Mammary epithelial cell (primary cell): ENCODE measurements at regions of chr1 and their contacts with region 1.

Region 1: GRCh38 chr1:24321697-24322469 is 2.7 kb downstream of the GRHL3 start:
- DNase-seq: peak; percentile 98
- H3K4me3 ChIP-seq: peak overlapping the region; percentile 17 to 57 (median 40)
- H3K27ac ChIP-seq: peak overlapping the region; percentile 92
- H3K4me1 ChIP-seq: peaks cover 65% of the 10 kb centered on the region
- H3K27me3 ChIP-seq: no peaks in the 10 kb centered on the region
- CTCF ChIP-seq: peak in 1 of 2 donors; percentile 12

Region 2: DNA sequence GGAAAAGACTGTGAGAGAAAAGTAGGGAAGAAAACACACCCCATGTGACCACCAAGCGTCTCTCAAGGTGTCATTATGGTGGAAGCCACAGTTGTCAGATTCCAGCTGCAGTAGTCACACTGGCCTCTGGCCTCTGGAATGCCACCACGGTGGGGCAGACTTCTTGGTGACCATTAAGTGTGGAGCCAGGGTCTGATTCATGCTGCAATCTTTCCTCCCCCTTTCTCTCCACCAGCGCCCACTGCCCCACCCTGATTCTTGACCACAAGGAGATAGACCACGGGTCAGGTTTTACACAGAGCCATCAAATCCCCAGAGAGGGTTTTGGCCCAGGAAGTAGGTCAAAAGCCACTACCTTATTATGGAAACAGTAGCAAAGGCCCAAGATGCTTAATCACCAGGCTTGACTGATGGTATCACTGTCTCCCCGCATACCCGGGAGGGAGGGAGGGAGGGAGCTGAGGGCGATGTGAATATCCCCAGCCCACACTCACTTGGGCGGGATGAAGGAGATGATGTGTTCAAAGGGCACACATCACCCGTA is 55.4 kb before region 1 on chr1:
- CTCF ChIA-PET with region 1: no interaction called
- dilution Hi-C with region 1: no loop called
- in situ Hi-C with region 1: no loop called
- intact Hi-C with region 1: loop called (anchors 1 kb)
- DNase-seq: peak; percentile 89
- H3K4me3 ChIP-seq: no peak overlapping the region
- H3K27ac ChIP-seq: no peak overlapping the region
- H3K4me1 ChIP-seq: peaks cover 5% of the 10 kb centered on the region
- H3K27me3 ChIP-seq: no peaks in the 10 kb centered on the region
- CTCF ChIP-seq: peak in 1 of 2 donors; percentile 14

Region 3: DNA sequence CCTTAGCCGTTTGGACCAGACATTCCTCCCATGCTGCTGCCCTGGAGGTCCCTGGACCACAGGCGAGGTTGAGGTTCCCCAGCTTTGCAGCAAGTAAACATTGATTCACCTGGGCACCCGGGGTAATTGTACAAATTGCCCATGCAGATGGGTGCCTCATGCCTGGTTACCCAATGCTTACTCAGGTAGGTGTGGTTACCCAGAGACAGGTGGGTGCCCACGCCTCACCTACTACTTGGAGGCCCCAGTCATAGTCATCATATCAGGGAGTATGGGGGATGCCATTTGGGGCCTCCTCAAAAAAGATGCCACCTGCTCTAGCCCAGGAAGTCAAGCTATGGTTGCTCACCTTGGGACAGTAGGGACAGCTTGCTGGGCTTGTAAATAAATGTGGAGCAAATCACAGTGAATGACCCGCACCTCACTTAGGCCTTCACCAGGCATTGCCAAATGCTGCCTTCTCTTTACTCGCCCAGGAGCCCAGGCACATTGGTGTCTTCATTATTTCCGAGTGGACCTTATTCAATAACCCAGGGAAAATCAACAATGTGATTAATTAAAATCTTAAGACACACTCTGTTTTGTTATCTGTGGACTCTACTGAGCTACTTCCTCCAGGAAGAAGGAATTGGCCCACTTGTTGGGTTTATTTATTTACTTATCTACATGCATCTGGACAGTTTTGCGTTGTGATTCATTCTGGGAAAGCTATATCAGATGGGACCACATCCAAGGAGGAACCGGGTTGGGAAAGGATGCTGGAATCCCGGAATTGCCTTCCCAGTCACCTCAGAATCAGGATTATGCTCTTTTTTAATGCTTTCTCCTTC is 38.3 kb before region 1 on chr1:
- CTCF ChIA-PET with region 1: interaction called, 9 read pairs
- dilution Hi-C with region 1: no loop called
- in situ Hi-C with region 1: no loop called
- intact Hi-C with region 1: loop called (anchors 5 kb)
- DNase-seq: peak; percentile 92
- H3K4me3 ChIP-seq: no peak overlapping the region
- H3K27ac ChIP-seq: peak overlapping the region; percentile 89
- H3K4me1 ChIP-seq: peaks cover 53% of the 10 kb centered on the region
- H3K27me3 ChIP-seq: no peaks in the 10 kb centered on the region
- CTCF ChIP-seq: no peak

Region 4: GRCh38 chr1:24289937-24290595 is 31.8 kb before region 1 on chr1:
- CTCF ChIA-PET with region 1: no interaction called
- dilution Hi-C with region 1: no loop called
- in situ Hi-C with region 1: no loop called
- intact Hi-C with region 1: loop called (anchors 1 kb)
- DNase-seq: peak; percentile 91
- H3K4me3 ChIP-seq: no peak overlapping the region
- H3K27ac ChIP-seq: peak overlapping the region; percentile 11
- H3K4me1 ChIP-seq: peaks cover 62% of the 10 kb centered on the region
- H3K27me3 ChIP-seq: no peaks in the 10 kb centered on the region
- CTCF ChIP-seq: no peak

Region 5: DNA sequence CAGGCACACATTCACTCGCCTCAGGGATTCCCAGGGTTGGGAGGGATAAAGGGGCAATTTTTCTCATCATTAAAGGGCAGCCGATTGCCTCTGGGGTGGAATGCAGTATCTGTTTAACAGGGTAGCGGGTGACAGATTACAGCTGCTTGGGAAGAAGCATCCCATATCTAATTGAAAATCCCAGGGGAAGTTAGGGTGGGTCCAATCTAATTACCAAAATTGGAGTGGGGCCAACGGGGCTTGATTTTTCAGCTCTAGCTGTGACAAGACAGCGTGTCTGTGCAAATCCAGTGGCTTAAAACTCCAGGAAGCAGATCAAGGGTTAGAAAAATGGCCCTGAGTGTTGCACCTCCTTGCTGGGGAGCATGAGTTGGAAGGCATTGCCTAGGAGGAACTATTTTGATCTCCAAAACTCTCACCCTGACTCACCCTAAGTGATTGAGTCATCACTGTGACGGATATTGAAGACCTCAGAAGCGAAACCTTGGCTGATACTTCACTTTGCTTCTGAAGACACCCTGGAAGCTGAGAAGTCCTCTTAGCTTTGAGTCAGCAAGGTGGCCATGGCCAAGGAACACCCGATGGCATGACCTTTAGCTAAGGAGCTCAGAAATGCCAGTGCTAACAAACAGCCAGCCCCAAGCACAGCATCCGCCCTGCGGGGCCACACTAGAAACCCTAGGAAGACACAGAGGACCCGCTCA is 43.2 kb after region 1 on chr1:
- CTCF ChIA-PET with region 1: no interaction called
- dilution Hi-C with region 1: no loop called
- in situ Hi-C with region 1: no loop called
- intact Hi-C with region 1: loop called (anchors 1 kb)
- DNase-seq: peak; percentile 99
- H3K4me3 ChIP-seq: no peak overlapping the region
- H3K27ac ChIP-seq: peak overlapping the region; percentile 89
- H3K4me1 ChIP-seq: peaks cover 38% of the 10 kb centered on the region
- H3K27me3 ChIP-seq: no peaks in the 10 kb centered on the region
- CTCF ChIP-seq: no peak

Region 6: DNA sequence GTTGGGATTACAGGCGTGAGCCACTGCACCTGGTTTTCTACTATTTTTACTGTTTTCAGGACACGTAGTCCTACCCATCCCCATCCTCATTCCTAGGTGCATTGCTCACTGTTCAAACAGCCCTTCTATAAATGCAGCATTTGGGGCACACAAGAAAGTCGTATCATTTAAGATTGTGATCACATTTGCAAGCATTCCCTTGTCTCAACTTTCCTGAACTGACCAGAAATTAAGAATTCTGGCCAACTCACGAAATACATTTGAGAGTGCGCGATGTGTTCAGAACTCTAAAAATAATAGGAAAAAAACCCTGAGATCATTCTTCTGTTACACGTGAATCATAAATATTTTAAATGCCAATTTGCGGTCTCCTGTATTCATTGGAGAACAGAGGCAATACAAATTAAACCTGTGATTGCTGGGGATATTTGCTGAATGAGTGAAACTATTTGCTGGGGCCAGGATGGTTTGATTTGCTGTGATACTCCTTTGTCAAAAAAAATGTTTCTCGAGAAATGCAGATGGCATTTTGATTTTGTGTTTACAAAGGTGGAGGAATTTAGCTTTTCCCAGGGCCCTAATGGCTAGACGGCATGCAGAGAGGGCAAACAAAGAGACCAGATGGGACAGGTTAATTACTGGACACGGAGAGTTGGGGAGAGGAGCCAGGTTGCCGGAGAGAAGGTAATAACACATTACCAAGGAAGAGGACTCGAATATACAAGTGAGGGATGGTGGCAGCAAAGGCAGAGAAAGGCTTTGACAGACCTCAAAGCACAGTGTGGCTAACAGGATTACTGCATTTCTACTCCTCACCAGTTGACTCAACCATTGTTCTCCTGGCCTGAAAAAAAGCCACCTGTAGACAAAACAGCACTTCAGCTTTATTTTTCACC is 53.3 kb after region 1 on chr1:
- CTCF ChIA-PET with region 1: interaction called, 3 read pairs
- dilution Hi-C with region 1: no loop called
- in situ Hi-C with region 1: loop called in 1 of 2 experiments (anchors 5 kb)
- intact Hi-C with region 1: no loop called
- DNase-seq: no peak
- H3K4me3 ChIP-seq: no peak overlapping the region
- H3K27ac ChIP-seq: no peak overlapping the region
- H3K4me1 ChIP-seq: peaks cover 15% of the 10 kb centered on the region
- H3K27me3 ChIP-seq: no peaks in the 10 kb centered on the region
- CTCF ChIP-seq: no peak

Region 7: DNA sequence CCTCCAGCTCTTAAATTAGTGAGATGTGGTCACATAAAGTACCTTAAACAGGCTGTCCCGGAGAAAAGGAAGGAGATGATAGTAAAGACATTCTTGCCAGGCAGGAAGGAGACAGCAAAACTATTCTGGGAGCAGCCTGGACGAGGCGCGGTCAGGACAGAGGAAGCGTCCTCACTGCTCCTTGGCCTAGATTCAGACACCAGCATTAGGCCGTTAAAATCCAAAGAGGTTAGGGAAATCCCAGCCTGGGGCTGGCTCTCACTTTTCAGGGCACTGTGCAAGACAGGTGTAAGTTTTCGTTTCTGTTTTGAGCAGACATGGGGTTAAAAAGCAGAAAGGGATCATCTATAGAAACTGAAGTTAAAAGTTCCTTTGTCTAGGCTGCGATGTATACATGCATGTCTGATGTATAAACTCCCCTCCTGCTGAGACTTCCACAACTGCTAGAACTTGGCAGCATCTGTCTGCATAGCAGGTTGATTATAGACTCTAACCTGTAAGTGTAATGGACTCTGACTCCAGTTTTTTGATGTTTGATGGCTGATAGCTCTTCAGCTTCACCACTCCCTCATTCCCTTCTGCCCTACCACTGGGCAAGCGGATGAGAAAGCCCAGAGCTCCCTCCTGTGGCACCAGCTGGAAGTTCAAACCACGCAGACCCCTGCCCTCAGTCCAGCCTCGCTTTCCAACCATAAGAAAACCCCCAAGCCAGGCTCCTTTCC is 70.2 kb after region 1 on chr1:
- CTCF ChIA-PET with region 1: interaction called, 5 read pairs
- dilution Hi-C with region 1: no loop called
- in situ Hi-C with region 1: no loop called
- intact Hi-C with region 1: loop called (anchors 1 kb)
- DNase-seq: peak; percentile 50
- H3K4me3 ChIP-seq: peak overlapping the region in 2 of 3 experiments; percentile 14 to 24
- H3K27ac ChIP-seq: peak overlapping the region; percentile 76
- H3K4me1 ChIP-seq: peaks cover 28% of the 10 kb centered on the region
- H3K27me3 ChIP-seq: no peaks in the 10 kb centered on the region
- CTCF ChIP-seq: peak; percentile 87 to 90